CD14-positive monocyte (primary cell): ENCODE measurements at regions of chr9 and their contacts with region 1.

Region 1: GRCh38 chr9:35829084-35829763 is at the start of gene TMEM8B:
- DNase-seq: peak; percentile 80 to 92 (median 85)
- H3K4me3 ChIP-seq: peak within 1 kb of the TSS; percentile 67 to 94 (median 78)
- H3K4me3 Mint-ChIP-seq: peak within 1 kb of the TSS; percentile 94 to 99
- H3K27ac ChIP-seq: peak within 1 kb of the TSS; percentile 10 to 73
- H3K27ac Mint-ChIP-seq: peak within 1 kb of the TSS; percentile 81 to 99 (median 92)
- H3K4me1 ChIP-seq: peaks cover 53 to 64% of the 10 kb centered on the region in 2 donors
- H3K4me1 Mint-ChIP-seq: peaks cover 65% of the 10 kb centered on the region
- H3K27me3 ChIP-seq: no peaks in the 10 kb centered on the region
- H3K27me3 Mint-ChIP-seq: peaks cover 14 to 18% (median 17%) of the 10 kb centered on the region in 3 donors
- CTCF ChIP-seq: no peak
- polyA plus RNA-seq, gene TMEM8B: 2.6 to 11.6 (median 3.8) TPM

Region 2: GRCh38 chr9:35673132-35674024 is 155.8 kb before region 1 on chr9 and contains the start of gene CA9:
- intact Hi-C with region 1: no loop called
- DNase-seq: no peak
- H3K4me3 ChIP-seq: no peak within 1 kb of the TSS
- H3K4me3 Mint-ChIP-seq: peak within 1 kb of the TSS; percentile 39 to 53
- H3K27ac ChIP-seq: no peak within 1 kb of the TSS
- H3K27ac Mint-ChIP-seq: peak within 1 kb of the TSS in 1 of 7 donors; percentile 46
- H3K4me1 ChIP-seq: peaks cover 12 to 13% of the 10 kb centered on the region in 2 donors
- H3K4me1 Mint-ChIP-seq: peaks cover 10% of the 10 kb centered on the region
- H3K27me3 ChIP-seq: peaks cover 7 to 27% of the 10 kb centered on the region in 2 donors
- H3K27me3 Mint-ChIP-seq: peaks cover 24 to 37% (median 31%) of the 10 kb centered on the region in 3 donors
- CTCF ChIP-seq: no peak
- polyA plus RNA-seq, gene CA9: not detected

Region 3: DNA sequence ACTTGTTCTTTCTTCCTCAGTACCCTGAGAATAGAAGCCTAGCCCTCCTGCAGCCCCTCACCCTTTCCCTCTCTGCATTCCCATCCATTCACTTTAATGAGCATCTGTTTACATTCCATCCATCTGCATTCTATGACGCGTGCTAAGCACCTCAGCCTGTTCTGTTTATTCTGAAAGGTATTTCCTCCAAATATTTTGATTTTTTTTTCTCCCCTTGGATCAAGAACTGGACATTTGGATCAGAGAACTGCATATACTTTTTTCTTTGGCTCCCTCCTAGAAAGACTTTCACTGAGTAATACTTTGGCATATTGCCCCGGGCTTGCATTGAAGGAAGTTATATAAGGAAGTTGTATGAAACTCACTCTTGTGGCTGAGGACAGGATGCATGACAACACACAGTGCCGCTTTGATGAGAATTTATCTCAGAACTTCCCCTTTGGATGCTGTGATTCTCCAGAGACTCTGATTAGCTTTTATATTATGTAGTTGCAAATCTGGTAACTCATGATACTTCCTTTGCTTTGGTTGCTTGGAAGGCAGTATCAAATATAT is 15.6 kb after region 1 on chr9:
- intact Hi-C with region 1: loop called in 1 of 2 experiments (anchors 2 kb)
- DNase-seq: peak; percentile 89 to 96 (median 96)
- H3K4me3 ChIP-seq: peak overlapping the region in 2 of 3 experiments; percentile 7 to 60
- H3K4me3 Mint-ChIP-seq: peak overlapping the region; percentile 63 to 93
- H3K27ac ChIP-seq: peak overlapping the region; percentile 72 to 78
- H3K27ac Mint-ChIP-seq: peak overlapping the region; percentile 90 to 100 (median 98)
- H3K4me1 ChIP-seq: peaks cover 72 to 75% of the 10 kb centered on the region in 2 donors
- H3K4me1 Mint-ChIP-seq: peaks cover 75% of the 10 kb centered on the region
- H3K27me3 ChIP-seq: peaks cover 8 to 16% of the 10 kb centered on the region in 2 donors
- H3K27me3 Mint-ChIP-seq: peaks cover 13 to 41% (median 26%) of the 10 kb centered on the region in 3 donors
- CTCF ChIP-seq: no peak

Region 4: DNA sequence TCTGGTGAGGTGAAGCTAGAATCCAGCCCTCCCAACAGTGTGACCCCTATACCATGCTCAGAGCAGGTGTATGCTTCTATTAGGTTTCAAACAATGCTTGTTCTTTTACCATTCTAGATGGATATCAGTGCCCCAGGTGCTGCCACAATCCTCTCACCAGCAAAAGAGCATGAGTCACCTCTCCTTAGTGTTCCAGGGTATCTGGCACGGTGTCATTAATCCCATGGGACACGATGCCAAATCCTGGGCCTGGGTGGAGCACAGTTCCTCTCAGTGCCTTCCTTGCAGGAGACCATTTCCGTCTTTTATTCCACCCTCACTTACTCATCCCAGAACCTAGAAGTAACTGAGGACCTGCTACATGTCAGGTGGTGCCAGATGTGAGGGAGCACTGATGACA is 42.3 kb after region 1 on chr9:
- intact Hi-C with region 1: loop called in 1 of 2 experiments (anchors 5 kb)
- DNase-seq: no peak
- H3K4me3 ChIP-seq: no peak overlapping the region
- H3K4me3 Mint-ChIP-seq: no peak overlapping the region
- H3K27ac ChIP-seq: no peak overlapping the region
- H3K27ac Mint-ChIP-seq: no peak overlapping the region
- H3K4me1 ChIP-seq: no peaks in the 10 kb centered on the region
- H3K4me1 Mint-ChIP-seq: peaks cover 4% of the 10 kb centered on the region
- H3K27me3 ChIP-seq: peaks cover 4 to 18% of the 10 kb centered on the region in 2 donors
- H3K27me3 Mint-ChIP-seq: peaks cover 11 to 20% (median 12%) of the 10 kb centered on the region in 3 donors
- CTCF ChIP-seq: no peak

Region 5: DNA sequence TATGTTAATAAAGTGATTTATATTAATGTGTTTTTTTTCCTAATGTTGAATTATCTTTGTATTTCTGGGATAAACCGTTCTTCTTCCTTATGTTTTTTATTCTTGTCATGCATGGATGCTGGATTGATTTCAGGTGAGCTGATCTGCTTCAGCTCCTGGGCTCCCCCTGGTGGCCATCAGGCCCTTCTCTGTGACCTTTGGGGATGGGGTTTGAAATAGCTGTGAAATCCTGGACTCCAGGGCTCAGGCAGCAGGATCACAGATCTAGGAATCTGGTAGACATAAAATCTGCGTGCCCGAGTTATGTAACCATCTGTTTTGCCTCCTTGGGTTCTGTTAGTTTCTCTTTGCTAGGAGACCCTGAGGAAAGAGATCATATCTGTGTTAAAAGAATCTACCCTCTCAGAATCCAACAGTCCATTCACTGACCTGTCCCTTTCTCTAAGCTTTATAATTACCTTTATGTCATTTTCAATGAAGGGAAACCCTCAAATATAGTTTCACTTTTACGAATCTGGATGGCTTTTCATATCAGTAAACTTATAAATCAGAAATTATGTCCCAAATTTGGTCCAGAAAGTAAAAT is 53.1 kb after region 1 on chr9:
- intact Hi-C with region 1: loop called in 1 of 2 experiments (anchors 5 kb)
- DNase-seq: peak; percentile 61 to 71 (median 62)
- H3K4me3 ChIP-seq: no peak overlapping the region
- H3K4me3 Mint-ChIP-seq: no peak overlapping the region
- H3K27ac ChIP-seq: no peak overlapping the region
- H3K27ac Mint-ChIP-seq: no peak overlapping the region
- H3K4me1 ChIP-seq: no peaks in the 10 kb centered on the region
- H3K4me1 Mint-ChIP-seq: no peaks in the 10 kb centered on the region
- H3K27me3 ChIP-seq: peaks cover 3 to 6% of the 10 kb centered on the region in 2 donors
- H3K27me3 Mint-ChIP-seq: peaks cover 14 to 16% (median 15%) of the 10 kb centered on the region in 3 donors
- CTCF ChIP-seq: peak; percentile 99

Region 6: GRCh38 chr9:35923927-35924763 is 94.9 kb after region 1 on chr9:
- intact Hi-C with region 1: no loop called
- DNase-seq: no peak
- H3K4me3 ChIP-seq: no peak overlapping the region
- H3K4me3 Mint-ChIP-seq: no peak overlapping the region
- H3K27ac ChIP-seq: no peak overlapping the region
- H3K27ac Mint-ChIP-seq: peak overlapping the region in 1 of 7 donors; percentile 14
- H3K4me1 ChIP-seq: peaks cover 6 to 7% of the 10 kb centered on the region in 2 donors
- H3K4me1 Mint-ChIP-seq: peaks cover 15% of the 10 kb centered on the region
- H3K27me3 ChIP-seq: no peaks in the 10 kb centered on the region
- H3K27me3 Mint-ChIP-seq: no peaks in the 10 kb centered on the region
- CTCF ChIP-seq: no peak